ENCODE measurements at regions of chr3 and their contacts with region 1.

Region 1: GRCh38 chr3:151918253-151919029 is 45.0 kb downstream of the SUCNR1 start:
- DNase-seq: peak; percentile 73
- H3K4me3 ChIP-seq: no peak overlapping the region
- H3K27ac ChIP-seq: no peak overlapping the region
- H3K4me1 ChIP-seq: peaks cover 4% of the 10 kb centered on the region
- H3K27me3 ChIP-seq: no peaks in the 10 kb centered on the region
- CTCF ChIP-seq: peak; percentile 71

Region 2: DNA sequence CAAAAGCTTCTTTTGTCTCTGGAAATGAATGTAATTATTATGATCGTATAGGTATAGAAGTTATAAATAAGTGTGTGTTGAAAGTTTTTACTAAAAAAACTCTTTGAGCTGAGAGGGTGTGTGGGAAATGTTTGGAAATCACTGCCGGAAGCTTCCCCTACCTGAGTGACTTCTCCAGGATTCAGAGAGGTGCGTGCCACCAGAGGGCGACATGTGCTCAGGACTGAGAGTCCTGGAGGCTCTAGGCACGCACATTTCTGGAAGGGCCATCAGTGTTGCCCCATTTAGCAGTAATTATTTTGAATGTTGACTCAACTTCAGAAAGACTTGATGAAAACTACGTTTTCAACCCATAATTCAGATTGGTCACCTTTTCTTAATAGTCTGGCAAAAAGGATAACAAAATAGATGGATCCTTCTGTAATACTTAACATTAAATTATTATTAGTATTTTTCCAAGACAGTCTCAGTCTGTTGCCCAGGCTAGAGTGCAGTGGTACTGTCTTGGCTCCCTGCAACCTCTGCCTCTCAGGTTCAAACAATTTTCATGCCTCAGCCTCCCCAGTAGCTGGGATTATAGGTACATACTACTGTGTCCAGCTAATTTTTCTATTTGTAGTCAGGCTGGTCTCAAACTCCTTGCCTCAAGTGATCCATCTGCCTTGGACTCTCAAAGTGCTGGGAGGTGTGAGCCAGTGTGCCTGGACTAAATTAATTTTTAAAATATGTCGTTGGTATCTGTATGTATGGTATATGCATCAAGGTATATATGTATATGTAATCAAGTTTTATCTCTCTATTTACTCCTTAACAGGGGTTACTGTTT is 750.0 kb before region 1 on chr3:
- CTCF ChIA-PET with region 1: no interaction called
- POLR2A ChIA-PET with region 1: no interaction called
- intact Hi-C with region 1: loop called (anchors 2 kb)
- DNase-seq: peak; percentile 72
- H3K4me3 ChIP-seq: no peak overlapping the region
- H3K27ac ChIP-seq: no peak overlapping the region
- H3K4me1 ChIP-seq: no peaks in the 10 kb centered on the region
- H3K27me3 ChIP-seq: no peaks in the 10 kb centered on the region
- CTCF ChIP-seq: peak; percentile 90

Region 3: DNA sequence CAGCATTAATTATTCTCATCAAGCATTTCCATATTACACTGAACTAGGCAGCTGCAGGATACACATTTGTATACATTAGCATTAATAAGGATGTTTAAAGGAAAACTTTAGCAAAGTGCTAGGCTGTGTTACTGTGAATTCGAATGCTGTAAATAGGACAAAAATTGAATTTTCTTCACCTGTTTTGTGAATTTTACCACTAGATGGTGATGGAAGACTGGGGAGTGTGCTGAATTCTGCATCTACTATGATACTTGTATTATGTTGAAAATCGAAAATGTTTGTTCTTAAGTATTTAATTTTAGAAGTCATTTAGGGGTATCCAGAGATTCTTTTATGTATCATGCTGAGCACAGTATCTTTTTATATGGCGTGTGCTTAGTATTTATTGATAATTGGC is 627.8 kb before region 1 on chr3:
- CTCF ChIA-PET with region 1: no interaction called
- POLR2A ChIA-PET with region 1: no interaction called
- intact Hi-C with region 1: loop called (anchors 2 kb)
- DNase-seq: peak; percentile 69
- H3K4me3 ChIP-seq: no peak overlapping the region
- H3K27ac ChIP-seq: no peak overlapping the region
- H3K4me1 ChIP-seq: no peaks in the 10 kb centered on the region
- H3K27me3 ChIP-seq: no peaks in the 10 kb centered on the region
- CTCF ChIP-seq: peak; percentile 69

Region 4: DNA sequence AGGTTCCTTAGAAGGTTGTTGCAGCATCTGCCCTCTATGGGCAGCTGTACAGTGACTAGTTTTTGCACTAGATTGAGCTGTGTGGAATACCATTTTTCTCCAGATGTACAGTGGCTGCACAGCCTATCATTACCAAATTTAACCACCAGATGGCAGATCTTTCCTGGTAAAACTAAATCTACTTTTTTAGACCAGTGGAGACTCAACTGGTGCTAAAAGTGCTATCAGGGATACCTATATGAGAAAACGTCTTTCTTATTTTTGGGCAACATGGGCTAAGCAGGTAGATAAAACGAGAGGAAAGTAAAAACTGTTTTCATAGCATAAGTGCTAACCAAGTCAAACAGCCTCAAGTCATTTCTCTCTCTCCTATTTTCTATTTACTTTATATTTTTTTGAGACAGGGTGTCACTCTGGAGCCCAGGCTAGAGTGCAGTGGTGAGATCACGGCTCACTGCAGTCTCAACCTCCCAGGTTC is 478.8 kb before region 1 on chr3:
- CTCF ChIA-PET with region 1: no interaction called
- POLR2A ChIA-PET with region 1: no interaction called
- intact Hi-C with region 1: loop called (anchors 1 kb)
- DNase-seq: peak; percentile 90
- H3K4me3 ChIP-seq: no peak overlapping the region
- H3K27ac ChIP-seq: peak overlapping the region; percentile 34
- H3K4me1 ChIP-seq: peaks cover 22% of the 10 kb centered on the region
- H3K27me3 ChIP-seq: no peaks in the 10 kb centered on the region
- CTCF ChIP-seq: peak; percentile 77

Region 5: DNA sequence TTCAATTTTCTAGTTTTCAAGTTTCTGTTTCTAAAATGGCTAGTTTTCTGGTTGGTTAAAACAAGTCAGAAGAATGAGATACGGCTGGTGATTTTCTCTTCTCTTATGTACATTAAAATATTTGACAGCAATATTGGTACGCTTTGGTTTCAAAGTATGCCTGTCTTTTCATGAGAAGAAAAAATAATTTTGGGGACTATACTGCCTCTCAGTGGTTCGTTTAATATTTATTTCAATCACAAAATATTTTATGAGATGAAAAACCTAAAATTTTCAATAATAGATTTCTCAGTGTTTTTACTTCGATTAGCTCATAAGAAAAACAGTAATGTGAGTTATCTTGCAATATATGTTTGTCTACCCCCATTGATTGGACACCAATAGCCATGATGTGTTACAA is 257.6 kb before region 1 on chr3:
- CTCF ChIA-PET with region 1: no interaction called
- POLR2A ChIA-PET with region 1: no interaction called
- intact Hi-C with region 1: loop called (anchors 10 kb)
- DNase-seq: peak; percentile 67
- H3K4me3 ChIP-seq: no peak overlapping the region
- H3K27ac ChIP-seq: peak overlapping the region; percentile 10
- H3K4me1 ChIP-seq: peaks cover 82% of the 10 kb centered on the region
- H3K27me3 ChIP-seq: no peaks in the 10 kb centered on the region
- CTCF ChIP-seq: peak; percentile 50; the same call in 1 of the 2 replicates

Region 6: DNA sequence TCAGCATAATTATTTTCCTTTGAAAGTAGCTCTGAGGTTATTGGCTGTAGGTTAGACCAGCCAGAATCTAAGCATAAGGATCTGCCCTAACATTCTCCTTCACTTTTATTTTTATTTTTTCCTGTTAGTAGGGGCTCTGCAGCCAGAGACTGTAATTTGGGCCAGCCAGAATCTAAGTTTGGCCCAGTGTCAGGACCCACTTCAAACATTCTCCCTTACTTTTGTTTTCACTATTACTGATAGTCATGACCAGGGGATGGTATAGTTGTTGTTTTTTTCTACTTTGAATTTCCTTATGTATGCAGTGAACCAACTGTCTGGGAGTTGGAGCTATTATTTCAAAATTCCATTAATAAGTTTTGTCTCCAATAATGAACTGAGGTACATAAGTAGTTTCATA is 229.3 kb after region 1 on chr3:
- CTCF ChIA-PET with region 1: no interaction called
- POLR2A ChIA-PET with region 1: no interaction called
- intact Hi-C with region 1: no loop called
- DNase-seq: no peak
- H3K4me3 ChIP-seq: no peak overlapping the region
- H3K27ac ChIP-seq: no peak overlapping the region
- H3K4me1 ChIP-seq: no peaks in the 10 kb centered on the region
- H3K27me3 ChIP-seq: no peaks in the 10 kb centered on the region
- CTCF ChIP-seq: no peak

Measured in A673 (cell line).